ENCODE measurements at regions of chr18 and their contacts with region 1.

Region 1: GRCh38 chr18:59823596-59824195 is 76.1 kb upstream of the PMAIP1 start:
- DNase-seq: no peak
- H3K4me3 ChIP-seq: no peak overlapping the region
- H3K27ac ChIP-seq: no peak overlapping the region
- H3K4me1 ChIP-seq: peaks cover 0 to 3% (median 0%) of the 10 kb centered on the region in 4 donors
- H3K27me3 ChIP-seq: no peaks in the 10 kb centered on the region
- CTCF ChIP-seq: peak; percentile 76 to 83 (median 77)
- EP300 ChIP-seq: no peak
- POLR2A ChIP-seq: no peak

Region 2: DNA sequence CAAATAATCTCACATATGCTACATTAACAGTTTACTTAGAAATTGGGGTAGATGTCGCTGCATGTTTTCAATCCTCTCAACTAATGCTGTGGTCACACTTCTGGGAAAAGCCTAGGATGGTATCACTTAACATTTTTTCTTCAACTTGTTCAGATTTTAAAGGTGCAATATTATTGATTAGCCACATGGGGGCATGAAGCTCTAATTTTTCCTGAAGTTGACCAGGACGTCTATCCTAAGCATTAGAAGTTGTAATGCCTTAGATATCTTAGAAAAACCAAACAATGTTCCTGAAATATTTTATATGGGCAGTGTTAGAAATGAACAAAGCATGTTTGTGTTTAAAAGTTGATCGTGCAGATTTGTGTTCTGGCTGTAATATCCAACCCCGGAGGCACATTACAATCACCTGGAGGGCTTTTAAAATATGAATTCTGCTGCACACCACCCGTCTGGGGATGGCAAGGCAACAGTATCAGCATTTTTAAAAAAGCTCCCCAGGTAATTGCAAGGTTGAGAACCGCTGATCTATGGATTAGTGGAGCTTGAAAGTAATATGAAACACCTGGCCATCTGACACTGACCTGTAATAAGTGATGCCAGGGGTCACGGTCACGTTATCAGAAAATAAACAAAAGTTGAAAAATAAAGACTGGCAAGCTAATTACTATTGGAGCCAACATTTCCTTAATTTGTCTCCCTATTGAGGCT is 364.2 kb before region 1 on chr18:
- intact Hi-C with region 1: loop called (anchors 2 kb)
- DNase-seq: no peak
- H3K4me3 ChIP-seq: no peak overlapping the region
- H3K27ac ChIP-seq: no peak overlapping the region
- H3K4me1 ChIP-seq: peaks cover 4 to 10% (median 9%) of the 10 kb centered on the region in 4 donors
- H3K27me3 ChIP-seq: no peaks in the 10 kb centered on the region
- CTCF ChIP-seq: peak; percentile 54 to 64 (median 58)
- EP300 ChIP-seq: no peak
- POLR2A ChIP-seq: no peak

Region 3: DNA sequence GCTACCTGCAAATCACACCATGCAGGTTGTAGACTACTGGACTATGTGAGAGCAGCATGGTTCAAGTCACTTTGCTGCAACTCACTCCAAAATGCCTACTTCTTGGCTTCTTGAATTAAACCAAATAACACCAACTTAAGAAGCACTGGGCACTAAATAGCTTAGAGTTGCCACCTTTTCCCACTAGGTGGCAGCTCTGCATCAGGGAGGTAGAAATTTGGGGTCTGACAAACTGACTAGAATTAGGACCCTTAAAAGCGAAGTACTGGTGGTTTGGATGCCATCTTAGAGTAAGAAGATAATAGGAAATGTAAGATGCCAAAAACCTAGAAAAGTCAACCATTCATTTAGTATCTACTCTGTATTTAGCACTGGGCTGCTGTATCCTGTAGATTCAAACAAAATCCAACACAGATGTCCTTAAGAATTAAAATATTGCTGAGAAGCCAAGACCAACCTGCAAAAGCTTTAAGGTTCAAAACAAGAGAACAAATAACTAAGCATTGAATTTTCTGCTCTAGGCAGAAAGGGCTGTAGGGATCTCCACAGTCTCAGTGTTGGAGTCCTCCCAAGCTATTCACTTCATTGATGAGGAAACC is 192.0 kb before region 1 on chr18:
- intact Hi-C with region 1: loop called (anchors 2 kb)
- DNase-seq: no peak
- H3K4me3 ChIP-seq: no peak overlapping the region
- H3K27ac ChIP-seq: no peak overlapping the region
- H3K4me1 ChIP-seq: no peaks in the 10 kb centered on the region
- H3K27me3 ChIP-seq: no peaks in the 10 kb centered on the region
- CTCF ChIP-seq: peak; percentile 39 to 64 (median 52)
- EP300 ChIP-seq: no peak
- POLR2A ChIP-seq: no peak

Region 4: GRCh38 chr18:59697236-59697932 is 126.3 kb before region 1 on chr18 and contains the start of gene CCBE1:
- intact Hi-C with region 1: loop called (anchors 2 kb)
- DNase-seq: no peak
- H3K4me3 ChIP-seq: peak within 1 kb of the TSS; percentile 54 to 67 (median 60)
- H3K27ac ChIP-seq: peak within 1 kb of the TSS in 1 of 4 donors; percentile 28
- H3K4me1 ChIP-seq: peaks cover 11 to 46% (median 33%) of the 10 kb centered on the region in 4 donors
- H3K27me3 ChIP-seq: peaks cover 0 to 26% (median 8%) of the 10 kb centered on the region in 4 donors
- CTCF ChIP-seq: peak; percentile 42 to 85 (median 71)
- EP300 ChIP-seq: no peak
- POLR2A ChIP-seq: no peak
- total RNA-seq, gene CCBE1: 1.6 to 11.1 (median 2.7) TPM

Region 5: GRCh38 chr18:60019463-60019840 is 195.8 kb after region 1 on chr18:
- intact Hi-C with region 1: no loop called
- DNase-seq: no peak
- H3K4me3 ChIP-seq: no peak overlapping the region
- H3K27ac ChIP-seq: no peak overlapping the region
- H3K4me1 ChIP-seq: peaks cover 0 to 38% (median 27%) of the 10 kb centered on the region in 4 donors
- H3K27me3 ChIP-seq: no peaks in the 10 kb centered on the region
- CTCF ChIP-seq: no peak
- EP300 ChIP-seq: no peak
- POLR2A ChIP-seq: no peak

Region 6: DNA sequence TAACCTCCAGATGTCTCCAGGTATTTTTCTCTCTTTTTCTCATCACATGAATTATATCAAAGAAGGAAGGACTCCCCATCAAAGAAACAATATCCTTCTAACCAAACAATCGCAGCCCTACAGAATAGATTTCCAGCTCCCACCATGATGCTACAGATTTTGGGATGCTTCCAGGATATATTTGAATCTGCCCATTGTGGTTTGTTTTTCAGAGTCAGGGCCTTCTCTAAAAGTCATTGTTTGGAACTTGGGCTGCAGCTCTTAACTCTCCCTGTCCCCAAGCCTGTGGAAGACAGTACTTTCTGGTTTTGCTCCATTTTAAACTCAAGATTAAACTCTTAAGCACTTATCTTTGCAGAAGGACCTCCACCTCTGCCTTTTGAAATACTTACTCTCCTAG is 299.3 kb after region 1 on chr18:
- intact Hi-C with region 1: no loop called
- DNase-seq: no peak
- H3K4me3 ChIP-seq: no peak overlapping the region
- H3K27ac ChIP-seq: no peak overlapping the region
- H3K4me1 ChIP-seq: no peaks in the 10 kb centered on the region
- H3K27me3 ChIP-seq: no peaks in the 10 kb centered on the region
- CTCF ChIP-seq: no peak
- EP300 ChIP-seq: no peak
- POLR2A ChIP-seq: no peak

Measured in esophagus muscularis mucosa (tissue), 4 donors.